ENCODE measurements at regions of chr2 and their contacts with region 1.

Region 1: DNA sequence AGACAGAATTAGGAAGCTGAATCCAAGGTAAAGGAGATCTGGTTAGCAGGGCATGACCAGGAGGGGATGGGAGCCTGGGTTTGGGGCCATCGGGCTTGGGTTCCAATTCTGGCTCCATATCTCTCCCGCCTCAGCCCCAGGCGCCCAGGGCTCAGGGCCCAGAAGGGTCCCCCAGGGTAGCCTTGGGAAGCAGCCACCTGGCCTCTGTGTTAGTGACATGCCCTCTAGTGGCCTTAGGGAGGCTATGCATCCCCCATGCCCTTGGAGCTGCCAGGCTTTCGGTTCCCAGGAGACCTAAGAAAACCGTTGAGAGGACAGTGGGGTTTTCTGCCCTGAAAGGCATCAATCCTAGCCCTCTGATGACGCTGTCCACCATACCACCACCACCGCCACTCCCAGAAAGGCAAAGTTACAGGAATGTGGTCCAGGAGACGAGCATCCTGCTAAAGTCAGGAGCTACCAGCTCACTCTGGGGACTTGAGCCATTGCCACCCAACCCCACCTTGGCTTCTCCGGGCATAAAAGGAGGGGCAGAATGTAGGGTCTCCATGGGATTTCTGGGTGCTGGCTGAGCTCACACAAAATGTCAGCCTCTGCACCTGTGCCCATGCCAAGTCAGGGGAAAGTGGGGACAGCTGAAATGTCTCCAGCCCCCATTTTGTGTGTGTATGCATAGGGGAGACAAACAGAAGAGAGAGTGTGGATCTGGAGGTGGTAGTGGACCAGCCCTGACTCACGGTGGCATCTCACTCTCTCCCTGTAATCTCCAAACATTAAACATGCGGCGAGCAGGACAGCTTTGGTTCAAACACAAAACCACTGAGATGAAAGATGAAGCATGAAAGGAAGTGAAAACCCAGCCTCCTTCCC is 56.5 kb downstream of the EMX1 start:
- DNase-seq: peak; percentile 62
- H3K4me3 Mint-ChIP-seq: no peak overlapping the region
- H3K27ac Mint-ChIP-seq: no peak overlapping the region
- H3K4me1 Mint-ChIP-seq: no peaks in the 10 kb centered on the region
- H3K27me3 Mint-ChIP-seq: peaks cover 13% of the 10 kb centered on the region

Region 2: DNA sequence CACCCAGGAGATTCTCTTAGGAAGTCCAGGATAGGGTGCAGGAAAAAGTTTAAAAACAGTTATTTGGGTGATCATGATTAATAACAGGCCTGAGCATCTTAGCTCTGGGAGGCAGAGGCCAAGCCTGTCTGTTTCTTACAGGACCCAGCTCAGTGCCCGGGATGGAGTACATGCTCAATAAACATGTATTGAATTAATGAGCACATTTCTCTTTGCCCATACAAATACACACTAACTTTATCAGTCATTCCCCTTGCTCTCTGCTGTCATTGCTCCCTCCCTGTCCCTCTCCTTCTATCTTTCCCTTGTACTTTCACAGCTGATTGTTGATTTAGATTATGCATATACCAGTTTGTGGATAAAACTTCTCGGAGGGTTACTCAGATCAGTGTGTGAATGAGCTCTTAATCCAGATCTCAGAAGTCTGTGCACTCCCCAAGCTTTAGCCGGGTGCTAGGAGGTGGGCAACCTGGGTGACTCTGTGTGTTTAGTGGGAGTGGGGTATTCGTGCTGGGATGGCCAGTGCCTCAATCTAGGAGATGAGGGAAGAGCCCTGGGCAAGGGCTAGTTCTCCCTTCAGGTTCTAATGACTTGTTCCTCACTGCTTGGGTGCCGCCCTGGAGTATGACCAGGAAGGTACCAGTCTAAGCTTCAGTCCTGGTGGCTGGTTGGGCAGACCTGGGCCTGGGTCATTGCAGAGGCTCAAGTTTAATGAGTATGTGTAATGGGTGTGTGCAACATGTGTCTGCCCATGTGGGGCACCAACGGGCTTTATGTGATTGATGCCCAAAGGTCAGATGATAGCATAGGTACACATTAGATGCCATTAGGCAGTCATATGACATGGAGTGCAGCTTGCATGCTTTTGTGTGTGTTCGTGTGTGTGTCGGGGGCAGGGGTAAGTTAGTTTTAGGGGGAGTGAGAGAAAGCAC is 45.9 kb before region 1 on chr2:
- CTCF ChIA-PET with region 1: interaction called, 13 read pairs
- DNase-seq: peak; percentile 14
- H3K4me3 Mint-ChIP-seq: no peak overlapping the region
- H3K27ac Mint-ChIP-seq: no peak overlapping the region
- H3K4me1 Mint-ChIP-seq: peaks cover 11% of the 10 kb centered on the region
- H3K27me3 Mint-ChIP-seq: peaks cover 30% of the 10 kb centered on the region

Region 3: DNA sequence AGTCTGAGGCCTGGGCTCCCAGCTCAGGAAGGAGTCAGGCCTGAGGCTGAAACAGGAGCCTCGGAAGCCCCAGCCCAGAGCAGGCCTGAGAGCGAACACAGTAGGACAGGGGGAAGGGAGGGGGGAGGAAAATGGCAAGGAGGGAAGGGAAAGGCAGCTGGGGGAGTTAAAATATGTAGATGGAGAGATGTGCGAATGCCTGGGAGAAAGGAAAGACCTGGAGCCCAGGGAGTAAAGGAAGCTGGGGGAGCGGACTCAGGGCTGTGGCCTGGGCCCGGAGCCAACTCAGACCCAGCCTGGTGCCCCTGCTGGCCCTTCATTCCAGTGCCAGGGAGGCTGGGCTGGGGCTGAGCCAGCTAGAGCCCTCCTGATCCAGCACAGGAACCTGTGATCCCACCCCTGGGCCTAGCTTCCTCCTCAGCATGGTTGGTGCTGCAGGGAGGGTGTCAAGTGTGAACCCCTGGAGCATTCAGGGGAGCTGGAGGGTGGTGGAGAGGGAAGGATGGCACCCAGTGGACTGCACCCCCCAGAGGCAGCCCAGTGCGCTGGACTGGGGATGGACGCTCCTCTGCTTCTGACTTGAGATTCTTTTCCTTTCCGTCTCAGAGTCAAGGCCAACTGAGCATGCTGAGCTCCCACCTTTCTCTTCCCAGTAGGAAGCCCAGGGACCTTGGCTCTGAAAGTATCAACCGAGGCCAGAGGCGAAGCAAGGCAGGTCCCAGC is 10.2 kb before region 1 on chr2:
- CTCF ChIA-PET with region 1: interaction called, 13 read pairs
- DNase-seq: no peak
- H3K4me3 Mint-ChIP-seq: no peak overlapping the region
- H3K27ac Mint-ChIP-seq: peak overlapping the region; percentile 49
- H3K4me1 Mint-ChIP-seq: no peaks in the 10 kb centered on the region
- H3K27me3 Mint-ChIP-seq: no peaks in the 10 kb centered on the region

Region 4: DNA sequence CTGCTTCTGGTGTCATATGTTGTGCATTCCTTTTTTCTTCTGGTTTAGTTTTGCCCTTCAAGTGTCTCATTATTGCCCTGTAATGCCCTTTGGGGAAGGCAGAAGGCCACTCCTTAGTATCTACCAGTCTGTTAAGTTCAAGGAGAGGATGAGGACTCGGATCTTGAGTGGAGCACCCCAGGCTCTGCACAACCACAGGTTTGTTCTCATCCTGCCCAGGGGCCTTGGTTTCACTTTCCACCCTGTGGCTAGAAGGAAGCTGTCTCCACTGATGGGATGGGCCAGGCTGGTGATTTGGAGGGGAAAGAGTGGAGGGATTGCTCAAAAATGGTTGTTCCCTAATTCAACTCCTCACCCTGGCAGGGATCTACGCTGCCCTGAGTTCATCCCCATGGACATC is 169.1 kb after region 1 on chr2:
- CTCF ChIA-PET with region 1: no interaction called
- DNase-seq: peak; percentile 24
- H3K4me3 Mint-ChIP-seq: no peak overlapping the region
- H3K27ac Mint-ChIP-seq: no peak overlapping the region
- H3K4me1 Mint-ChIP-seq: peaks cover 3% of the 10 kb centered on the region
- H3K27me3 Mint-ChIP-seq: peaks cover 26% of the 10 kb centered on the region